Natural killer cell (primary cell): ENCODE measurements at regions of chr2 and their contacts with region 1.

Region 1: GRCh38 chr2:71545572-71546274 is 92.4 kb downstream of the DYSF start:
- DNase-seq: peak in 1 of 2 donors; percentile 74
- ATAC-seq: peak; percentile 52 to 83 (median 64)
- H3K4me3 ChIP-seq: no peak overlapping the region
- H3K4me3 Mint-ChIP-seq: peak overlapping the region; percentile 32
- H3K27ac ChIP-seq: no peak overlapping the region
- H3K27ac Mint-ChIP-seq: peak overlapping the region in 1 of 2 donors; percentile 63
- H3K4me1 ChIP-seq: peaks cover 11% of the 10 kb centered on the region
- H3K4me1 Mint-ChIP-seq: peaks cover 14% of the 10 kb centered on the region in 2 donors
- H3K27me3 ChIP-seq: no peaks in the 10 kb centered on the region
- H3K27me3 Mint-ChIP-seq: peaks cover 8 to 18% of the 10 kb centered on the region in 2 donors
- CTCF ChIP-seq: peak; percentile 63

Region 2: DNA sequence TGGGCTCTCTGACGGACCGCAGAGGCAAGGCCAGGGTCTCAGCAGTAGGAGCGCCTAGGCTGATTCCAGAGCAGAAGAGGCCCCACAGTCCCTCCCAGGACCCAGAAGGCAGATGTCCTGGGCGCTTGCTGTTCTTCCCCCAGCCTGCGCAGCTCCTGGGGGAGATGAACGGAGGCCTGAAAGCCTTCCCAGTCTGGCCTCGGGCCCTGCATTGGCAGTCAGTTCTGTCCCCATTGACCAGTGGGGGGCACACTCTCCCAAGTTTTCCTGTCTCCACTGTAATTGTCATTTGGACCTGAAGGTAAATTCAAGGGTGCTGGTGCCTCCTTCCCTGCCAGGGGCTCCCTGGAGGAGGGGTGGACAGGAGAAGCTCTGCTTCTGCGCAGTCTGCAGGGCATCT is 256.2 kb after region 1 on chr2:
- intact Hi-C with region 1: loop called (anchors 5 kb)
- DNase-seq: no peak
- ATAC-seq: no peak
- H3K4me3 ChIP-seq: no peak overlapping the region
- H3K4me3 Mint-ChIP-seq: no peak overlapping the region
- H3K27ac ChIP-seq: no peak overlapping the region
- H3K27ac Mint-ChIP-seq: no peak overlapping the region
- H3K4me1 ChIP-seq: no peaks in the 10 kb centered on the region
- H3K4me1 Mint-ChIP-seq: no peaks in the 10 kb centered on the region
- H3K27me3 ChIP-seq: no peaks in the 10 kb centered on the region
- H3K27me3 Mint-ChIP-seq: peaks cover 0 to 5% of the 10 kb centered on the region in 2 donors
- CTCF ChIP-seq: no peak

Region 3: DNA sequence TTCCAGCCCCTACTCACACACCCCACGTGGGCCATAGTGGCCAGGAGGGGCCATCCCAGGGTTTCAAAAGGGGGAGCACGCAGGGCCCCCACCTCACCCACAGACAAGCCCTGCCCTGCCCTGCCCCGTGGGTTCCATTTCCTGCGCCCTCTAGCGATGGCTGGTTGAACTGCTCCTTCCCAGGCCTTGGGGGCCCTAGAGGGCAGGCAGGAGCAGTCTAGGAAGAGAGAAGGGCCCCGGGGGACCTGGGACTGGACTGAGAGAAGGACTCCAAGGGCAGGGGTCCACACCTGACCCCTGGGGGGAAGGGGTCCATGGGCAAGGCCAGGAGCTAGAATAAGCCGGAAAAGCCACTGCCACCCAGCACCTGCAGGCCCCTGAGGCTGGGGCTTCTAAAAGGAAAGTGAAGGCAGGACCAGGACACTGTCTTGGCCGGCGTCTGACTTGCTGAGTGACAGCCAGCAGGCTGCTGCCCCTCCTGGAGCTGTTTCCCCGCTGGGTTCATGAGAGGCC is 591.8 kb after region 1 on chr2:
- intact Hi-C with region 1: loop called (anchors 5 kb)
- DNase-seq: peak; percentile 36 to 64
- ATAC-seq: peak; percentile 40 to 81 (median 53)
- H3K4me3 ChIP-seq: no peak overlapping the region
- H3K4me3 Mint-ChIP-seq: no peak overlapping the region
- H3K27ac ChIP-seq: no peak overlapping the region
- H3K27ac Mint-ChIP-seq: no peak overlapping the region
- H3K4me1 ChIP-seq: peaks cover 6% of the 10 kb centered on the region
- H3K4me1 Mint-ChIP-seq: peaks cover 0 to 4% of the 10 kb centered on the region in 2 donors
- H3K27me3 ChIP-seq: no peaks in the 10 kb centered on the region
- H3K27me3 Mint-ChIP-seq: peaks cover 4 to 5% of the 10 kb centered on the region in 2 donors
- CTCF ChIP-seq: peak; percentile 73

Region 4: DNA sequence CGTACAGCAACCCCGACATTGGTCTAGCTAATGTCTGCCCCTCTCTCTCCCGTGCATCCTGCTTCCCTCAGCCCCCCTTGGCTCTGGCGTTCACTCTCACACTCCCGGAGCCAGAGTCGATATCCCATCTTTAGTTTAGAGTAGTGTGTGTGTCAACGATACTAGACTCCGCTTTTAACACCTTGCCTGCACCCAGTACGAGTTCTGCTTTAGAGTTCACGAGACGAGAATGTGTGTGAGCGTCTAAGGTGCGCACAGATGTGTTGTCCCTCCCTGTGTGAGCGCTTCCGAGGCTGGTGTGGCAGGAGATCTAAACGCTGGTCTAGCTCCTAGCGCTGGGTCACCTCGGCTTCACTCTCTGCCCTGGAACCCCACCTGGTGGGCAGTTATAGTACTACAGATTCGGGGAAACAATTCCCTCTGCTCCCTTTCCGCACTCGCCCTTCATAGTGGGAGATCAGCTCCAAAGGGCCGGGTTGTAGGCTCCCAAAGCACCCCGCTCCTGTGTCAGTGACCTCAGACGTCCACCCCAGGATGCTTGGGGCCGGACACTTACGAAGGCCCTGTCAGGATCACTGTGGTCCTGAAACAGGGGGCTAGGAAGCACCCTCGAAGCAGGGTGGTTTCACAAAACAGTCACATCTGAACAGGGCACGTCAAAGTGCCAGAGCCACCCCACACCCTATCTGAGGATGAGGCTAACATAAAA is 604.6 kb after region 1 on chr2:
- intact Hi-C with region 1: loop called (anchors 2 kb)
- DNase-seq: peak; percentile 25 to 70
- ATAC-seq: peak; percentile 69 to 82 (median 74)
- H3K4me3 ChIP-seq: no peak overlapping the region
- H3K4me3 Mint-ChIP-seq: peak overlapping the region; percentile 90
- H3K27ac ChIP-seq: no peak overlapping the region
- H3K27ac Mint-ChIP-seq: no peak overlapping the region
- H3K4me1 ChIP-seq: peaks cover 35% of the 10 kb centered on the region
- H3K4me1 Mint-ChIP-seq: peaks cover 33 to 38% of the 10 kb centered on the region in 2 donors
- H3K27me3 ChIP-seq: peaks cover 33% of the 10 kb centered on the region
- H3K27me3 Mint-ChIP-seq: peaks cover 51 to 60% of the 10 kb centered on the region in 2 donors
- CTCF ChIP-seq: peak; percentile 56

Region 5: DNA sequence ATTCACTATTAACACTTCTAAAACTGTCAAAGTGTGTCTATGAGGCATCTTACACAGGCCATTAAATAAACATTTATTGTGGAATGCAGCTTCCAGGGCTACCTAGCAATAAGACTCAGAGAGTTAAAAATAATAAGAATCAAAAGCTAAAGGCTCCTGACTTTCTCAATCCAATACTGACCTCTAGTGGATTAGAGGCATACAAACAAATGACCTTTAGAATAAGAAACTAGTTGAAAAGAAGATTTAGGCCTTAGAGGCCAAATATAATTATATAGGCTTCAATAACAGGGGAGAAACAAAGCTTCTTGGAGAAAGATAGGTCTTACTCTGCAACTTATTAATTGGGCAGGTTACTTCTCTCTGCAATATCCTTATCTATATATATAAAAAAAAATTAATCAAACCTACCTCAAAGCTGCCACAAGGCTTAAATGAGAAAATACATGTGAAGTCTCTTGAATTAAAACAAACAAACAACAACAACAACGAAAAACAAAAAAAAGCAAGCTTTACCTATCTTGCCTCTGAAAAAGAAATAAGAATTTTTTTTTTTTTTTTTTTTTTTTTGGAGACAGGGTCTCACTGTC is 1034.0 kb after region 1 on chr2:
- intact Hi-C with region 1: loop called (anchors 1 kb)
- DNase-seq: peak in 1 of 2 donors; percentile 47
- ATAC-seq: peak in 2 of 3 donors; percentile 53 to 61
- H3K4me3 ChIP-seq: no peak overlapping the region
- H3K4me3 Mint-ChIP-seq: no peak overlapping the region
- H3K27ac ChIP-seq: no peak overlapping the region
- H3K27ac Mint-ChIP-seq: no peak overlapping the region
- H3K4me1 ChIP-seq: no peaks in the 10 kb centered on the region
- H3K4me1 Mint-ChIP-seq: no peaks in the 10 kb centered on the region
- H3K27me3 ChIP-seq: no peaks in the 10 kb centered on the region
- H3K27me3 Mint-ChIP-seq: no peaks in the 10 kb centered on the region
- CTCF ChIP-seq: peak; percentile 67

Region 6: GRCh38 chr2:72745679-72746368 is 1200.1 kb after region 1 on chr2:
- intact Hi-C with region 1: loop called (anchors 5 kb)
- DNase-seq: peak in 1 of 2 donors; percentile 62
- ATAC-seq: peak in 1 of 3 donors; percentile 33
- H3K4me3 ChIP-seq: no peak overlapping the region
- H3K4me3 Mint-ChIP-seq: no peak overlapping the region
- H3K27ac ChIP-seq: no peak overlapping the region
- H3K27ac Mint-ChIP-seq: no peak overlapping the region
- H3K4me1 ChIP-seq: no peaks in the 10 kb centered on the region
- H3K4me1 Mint-ChIP-seq: no peaks in the 10 kb centered on the region
- H3K27me3 ChIP-seq: no peaks in the 10 kb centered on the region
- H3K27me3 Mint-ChIP-seq: no peaks in the 10 kb centered on the region
- CTCF ChIP-seq: peak; percentile 61

Region 7: DNA sequence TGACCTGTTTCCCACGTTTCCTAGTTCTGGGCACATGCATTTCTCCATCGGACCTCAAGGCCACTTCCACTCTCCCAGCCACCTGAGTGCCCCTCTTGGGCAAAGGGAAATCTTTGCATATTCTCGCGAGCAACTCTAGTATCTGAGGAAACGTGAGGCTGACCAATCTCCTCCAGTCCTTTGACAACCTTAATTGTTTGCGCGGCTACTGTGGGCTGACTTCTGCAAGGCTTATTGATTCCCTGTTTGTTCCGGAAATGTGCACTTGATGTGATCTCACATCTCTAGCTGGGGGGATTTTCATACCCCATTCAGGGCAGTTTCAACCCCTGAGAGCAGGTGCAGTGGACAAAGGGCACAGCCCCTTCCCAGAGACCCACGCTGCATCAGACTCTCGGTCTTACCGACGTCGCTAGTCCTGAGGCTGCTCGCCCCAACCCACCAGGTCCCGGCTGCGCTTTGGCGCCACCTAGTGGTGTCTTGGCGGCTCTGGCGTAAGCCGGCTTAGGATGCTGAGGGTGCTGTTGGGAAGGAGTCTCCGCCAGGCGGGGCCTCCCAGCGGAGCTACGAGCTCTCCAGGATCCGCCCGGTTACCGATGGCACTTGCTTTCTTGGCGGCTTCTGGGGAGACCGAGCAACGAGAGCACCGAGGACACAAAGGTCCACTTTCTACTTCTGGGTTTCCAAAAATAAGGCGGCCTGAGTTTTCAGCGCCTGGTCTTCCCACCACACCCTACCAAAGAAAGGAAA is 1316.7 kb after region 1 on chr2:
- intact Hi-C with region 1: loop called (anchors 5 kb)
- DNase-seq: peak; percentile 81 to 93
- ATAC-seq: peak; percentile 93 to 98 (median 97)
- H3K4me3 ChIP-seq: no peak overlapping the region
- H3K4me3 Mint-ChIP-seq: peak overlapping the region; percentile 54
- H3K27ac ChIP-seq: no peak overlapping the region
- H3K27ac Mint-ChIP-seq: no peak overlapping the region
- H3K4me1 ChIP-seq: peaks cover 8% of the 10 kb centered on the region
- H3K4me1 Mint-ChIP-seq: peaks cover 8 to 9% of the 10 kb centered on the region in 2 donors
- H3K27me3 ChIP-seq: peaks cover 19% of the 10 kb centered on the region
- H3K27me3 Mint-ChIP-seq: peaks cover 34 to 62% of the 10 kb centered on the region in 2 donors
- CTCF ChIP-seq: peak; percentile 95